ENCODE measurements at regions of chr18 and their contacts with region 1.

Region 1: DNA sequence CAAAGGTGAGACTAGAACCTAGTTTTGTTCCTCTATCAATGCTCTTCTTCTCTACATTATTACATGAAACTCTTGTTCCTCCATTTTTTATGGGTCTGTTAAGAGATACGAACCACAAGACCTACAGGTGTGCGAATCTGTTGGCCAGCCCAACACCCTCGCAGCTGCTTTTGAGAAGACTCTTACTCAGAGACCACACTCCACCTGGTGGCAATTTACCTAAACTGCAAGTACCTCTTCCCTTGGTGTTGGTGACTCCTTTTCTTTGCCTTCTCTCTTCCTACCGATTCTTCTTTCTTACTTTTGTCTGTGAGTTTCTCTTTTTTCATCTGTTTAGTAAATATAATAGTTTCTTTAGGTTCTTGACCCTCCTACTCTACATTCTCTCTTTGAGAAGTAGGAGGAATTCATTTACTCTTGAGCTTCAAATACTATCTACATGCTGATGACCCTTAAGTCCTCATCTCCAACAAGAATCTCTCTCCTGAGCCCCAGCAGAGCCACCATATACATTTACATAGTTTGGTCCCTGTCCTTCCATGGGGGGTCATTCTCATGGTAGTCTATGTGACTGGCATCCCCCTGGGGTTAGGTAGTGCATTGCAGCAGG is 81.8 kb upstream of the GAREM1 start:
- H3K4me3 ChIP-seq: no peak overlapping the region
- H3K27ac ChIP-seq: no peak overlapping the region
- H3K4me1 ChIP-seq: no peaks in the 10 kb centered on the region
- CTCF ChIP-seq: peak; percentile 49; the same call in 1 of the 2 replicates

Region 2: GRCh38 chr18:32158108-32158624 is 394.4 kb before region 1 on chr18:
- CTCF ChIA-PET with region 1: interaction called, 53 read pairs
- POLR2A ChIA-PET with region 1: no interaction called
- H3K4me3 ChIP-seq: peak overlapping the region; percentile 14
- H3K27ac ChIP-seq: no peak overlapping the region
- H3K4me1 ChIP-seq: no peaks in the 10 kb centered on the region
- CTCF ChIP-seq: peak; percentile 88

Region 3: DNA sequence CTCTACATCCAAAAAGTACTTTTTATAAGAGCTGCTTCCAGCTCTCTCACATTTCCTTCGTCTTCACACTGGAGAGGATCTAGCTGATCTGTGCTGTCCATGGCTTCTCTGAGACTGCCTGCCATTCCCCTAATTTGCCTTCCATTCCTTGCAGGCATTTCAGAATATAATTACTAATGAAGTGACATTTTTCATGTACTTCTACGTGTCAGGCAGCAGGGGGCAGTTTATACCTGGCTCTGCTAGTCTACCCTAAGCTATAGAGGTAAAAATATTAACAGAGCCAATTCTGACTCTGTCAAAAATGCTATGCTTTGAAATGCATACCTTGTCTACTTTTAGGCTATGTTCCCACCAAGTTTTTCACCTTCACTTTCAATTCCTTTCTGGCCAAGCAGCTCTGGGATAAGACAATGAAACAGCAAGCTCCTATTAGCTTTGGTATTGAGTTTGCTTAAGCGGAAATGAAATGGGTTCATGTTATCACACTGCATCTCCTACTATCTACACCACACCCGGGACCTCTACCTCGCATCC is 280.8 kb before region 1 on chr18:
- CTCF ChIA-PET with region 1: interaction called, 136 read pairs
- POLR2A ChIA-PET with region 1: no interaction called
- H3K4me3 ChIP-seq: no peak overlapping the region
- H3K27ac ChIP-seq: no peak overlapping the region
- H3K4me1 ChIP-seq: no peaks in the 10 kb centered on the region
- CTCF ChIP-seq: peak; percentile 34

Region 4: GRCh38 chr18:32289483-32290075 is 262.9 kb before region 1 on chr18:
- CTCF ChIA-PET with region 1: interaction called, 18 read pairs
- POLR2A ChIA-PET with region 1: no interaction called
- H3K4me3 ChIP-seq: no peak overlapping the region
- H3K27ac ChIP-seq: no peak overlapping the region
- H3K4me1 ChIP-seq: no peaks in the 10 kb centered on the region
- CTCF ChIP-seq: no peak

Region 5: GRCh38 chr18:32530947-32531651 is 21.4 kb before region 1 on chr18:
- CTCF ChIA-PET with region 1: interaction called, 10 read pairs
- POLR2A ChIA-PET with region 1: no interaction called
- H3K4me3 ChIP-seq: no peak overlapping the region
- H3K27ac ChIP-seq: no peak overlapping the region
- H3K4me1 ChIP-seq: no peaks in the 10 kb centered on the region
- CTCF ChIP-seq: no peak

Region 6: DNA sequence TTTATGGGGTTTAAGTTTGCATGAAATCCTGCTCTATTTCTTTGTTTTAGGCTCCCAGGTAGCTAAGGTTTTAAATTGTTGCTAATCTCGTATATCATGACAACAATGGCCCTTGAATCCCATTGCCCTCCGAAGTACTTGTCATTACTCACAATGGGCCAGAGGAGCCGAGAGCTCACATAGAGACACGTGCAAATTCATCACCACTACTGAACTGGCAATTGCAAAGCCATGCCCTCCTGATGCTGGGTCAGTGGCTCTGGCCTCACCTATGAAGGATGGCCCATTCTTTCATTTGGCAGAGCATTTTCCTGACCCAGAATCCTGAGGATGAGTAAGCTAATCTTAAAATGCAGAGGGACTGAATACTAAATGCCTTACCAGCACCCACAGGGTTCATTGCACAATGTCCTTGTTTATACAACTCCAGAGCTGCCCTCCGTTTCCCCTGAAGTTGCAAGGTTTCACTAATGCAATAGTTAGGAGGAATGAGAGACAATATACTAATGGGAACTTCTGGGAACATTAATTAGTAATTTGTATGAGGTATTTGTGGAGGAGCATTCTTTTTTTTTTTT is 10.2 kb before region 1 on chr18:
- CTCF ChIA-PET with region 1: interaction called, 10 read pairs
- POLR2A ChIA-PET with region 1: no interaction called
- H3K4me3 ChIP-seq: no peak overlapping the region
- H3K27ac ChIP-seq: no peak overlapping the region
- H3K4me1 ChIP-seq: no peaks in the 10 kb centered on the region
- CTCF ChIP-seq: no peak

Region 7: DNA sequence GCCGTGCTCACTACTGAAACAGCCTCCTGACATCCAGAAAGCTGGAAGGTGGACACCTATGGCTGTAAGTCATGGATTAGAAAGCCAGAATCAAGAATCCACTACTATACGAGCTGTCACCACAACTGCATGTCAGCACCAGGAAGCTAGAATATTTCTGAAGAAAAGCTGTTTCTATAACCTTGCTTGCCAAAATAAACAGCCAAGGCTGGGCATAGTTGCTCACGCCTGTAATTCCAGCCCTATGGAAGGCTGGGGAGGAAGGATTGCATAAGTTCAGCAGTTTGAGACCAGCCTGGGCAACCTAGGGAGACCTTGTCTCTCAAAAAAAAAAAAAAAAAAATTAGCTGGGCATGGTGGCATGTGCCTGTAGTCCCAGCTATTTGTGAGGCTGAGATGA is 14.4 kb after region 1 on chr18:
- CTCF ChIA-PET with region 1: interaction called, 17 read pairs
- POLR2A ChIA-PET with region 1: no interaction called
- H3K4me3 ChIP-seq: no peak overlapping the region
- H3K27ac ChIP-seq: no peak overlapping the region
- H3K4me1 ChIP-seq: no peaks in the 10 kb centered on the region
- CTCF ChIP-seq: no peak

Region 8: GRCh38 chr18:32582455-32582854 is 29.9 kb after region 1 on chr18:
- CTCF ChIA-PET with region 1: no interaction called
- POLR2A ChIA-PET with region 1: no interaction called
- H3K4me3 ChIP-seq: no peak overlapping the region
- H3K27ac ChIP-seq: no peak overlapping the region
- H3K4me1 ChIP-seq: 0 out of 2 replicates have a peak, but pooled peaks cover 4% of the 10 kb centered on the region
- CTCF ChIP-seq: no peak

Measured in HEK293 (cell line).